ENCODE measurements at regions of chr2 and their contacts with region 1.

Region 1: DNA sequence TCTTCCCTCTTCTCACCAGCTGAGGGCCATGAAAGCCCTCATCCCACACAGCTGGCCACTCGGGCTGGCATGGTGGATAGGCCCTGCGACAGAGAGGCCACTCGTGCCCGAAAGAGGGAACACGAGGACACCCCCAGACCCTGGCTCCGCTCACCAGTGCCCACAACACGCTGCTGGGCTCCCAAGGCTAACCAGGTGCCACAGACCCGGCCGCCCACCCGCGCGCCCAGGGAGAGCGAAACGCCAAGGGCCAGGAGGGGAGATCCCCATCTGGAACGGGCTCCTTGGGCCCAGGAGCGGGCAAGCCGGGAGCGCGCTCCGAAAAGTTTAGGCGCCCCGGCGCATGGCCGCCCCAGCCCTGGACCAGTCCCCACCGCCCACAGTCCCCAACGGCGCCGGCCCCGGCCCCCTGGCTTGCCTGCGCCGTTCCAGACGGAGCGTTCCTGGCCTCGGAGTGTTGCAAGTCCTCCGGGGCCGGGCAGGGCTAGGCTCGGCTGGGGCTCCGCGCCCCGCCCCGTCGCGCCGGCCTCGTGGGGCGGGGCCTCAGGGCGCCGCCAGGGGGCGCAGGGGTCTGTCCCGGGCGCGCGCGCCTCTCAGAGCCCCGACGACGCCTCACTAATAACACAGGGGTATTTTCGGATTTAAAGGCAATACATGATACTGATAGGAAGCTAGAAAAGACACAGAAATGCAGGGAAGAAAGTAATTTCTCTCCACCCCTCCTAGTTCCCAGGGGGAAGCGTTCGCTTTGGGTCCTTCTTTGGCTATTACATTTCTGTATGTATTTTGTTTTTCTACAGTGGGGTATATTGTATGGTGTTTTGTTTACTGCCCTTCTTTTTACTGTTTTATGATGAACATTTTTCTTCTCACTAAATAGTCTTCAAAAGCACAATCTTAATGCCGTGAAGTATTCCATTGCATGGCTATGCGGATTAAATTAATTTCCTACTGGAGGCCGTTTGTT is at the start of gene TMBIM1:
- DNase-seq: peak; percentile 83 to 92 (median 87)
- ATAC-seq: peak; percentile 68 to 92 (median 86)
- H3K4me3 ChIP-seq: peak within 1 kb of the TSS; percentile 74 to 98 (median 90)
- H3K27ac ChIP-seq: peak within 1 kb of the TSS; percentile 90 to 100 (median 96)
- H3K4me1 ChIP-seq: peaks cover 2 to 71% (median 49%) of the 10 kb centered on the region in 12 donors
- H3K27me3 ChIP-seq: no peaks in the 10 kb centered on the region
- CTCF ChIP-seq: peak; percentile 63 to 99 (median 96)
- POLR2A ChIP-seq: peak; percentile 50 to 93
- total RNA-seq, gene TMBIM1: 89.1 to 173 (median 126) TPM

Region 2: GRCh38 chr2:218444692-218445357 is 152.5 kb after region 1 on chr2:
- intact Hi-C with region 1: no loop called
- DNase-seq: no peak
- ATAC-seq: no peak
- H3K4me3 ChIP-seq: no peak overlapping the region
- H3K27ac ChIP-seq: no peak overlapping the region
- H3K4me1 ChIP-seq: no peaks in the 10 kb centered on the region
- H3K27me3 ChIP-seq: no peaks in the 10 kb centered on the region
- CTCF ChIP-seq: no peak
- POLR2A ChIP-seq: no peak

Region 3: GRCh38 chr2:218466016-218466521 is 173.7 kb after region 1 on chr2:
- intact Hi-C with region 1: loop called in 3 of 10 experiments (anchors 5 to 10 kb)
- DNase-seq: no peak
- ATAC-seq: peak in 1 of 4 donors; percentile 26
- H3K4me3 ChIP-seq: no peak overlapping the region
- H3K27ac ChIP-seq: no peak overlapping the region
- H3K4me1 ChIP-seq: peaks cover 0 to 5% (median 1%) of the 10 kb centered on the region in 12 donors
- H3K27me3 ChIP-seq: no peaks in the 10 kb centered on the region
- CTCF ChIP-seq: peak; percentile 28 to 68 (median 50)
- POLR2A ChIP-seq: no peak

Measured in heart left ventricle (tissue), 16 donors.